Endothelial cell of umbilical vein (primary cell): ENCODE measurements at regions of chr17 and their contacts with region 1.

Region 1: DNA sequence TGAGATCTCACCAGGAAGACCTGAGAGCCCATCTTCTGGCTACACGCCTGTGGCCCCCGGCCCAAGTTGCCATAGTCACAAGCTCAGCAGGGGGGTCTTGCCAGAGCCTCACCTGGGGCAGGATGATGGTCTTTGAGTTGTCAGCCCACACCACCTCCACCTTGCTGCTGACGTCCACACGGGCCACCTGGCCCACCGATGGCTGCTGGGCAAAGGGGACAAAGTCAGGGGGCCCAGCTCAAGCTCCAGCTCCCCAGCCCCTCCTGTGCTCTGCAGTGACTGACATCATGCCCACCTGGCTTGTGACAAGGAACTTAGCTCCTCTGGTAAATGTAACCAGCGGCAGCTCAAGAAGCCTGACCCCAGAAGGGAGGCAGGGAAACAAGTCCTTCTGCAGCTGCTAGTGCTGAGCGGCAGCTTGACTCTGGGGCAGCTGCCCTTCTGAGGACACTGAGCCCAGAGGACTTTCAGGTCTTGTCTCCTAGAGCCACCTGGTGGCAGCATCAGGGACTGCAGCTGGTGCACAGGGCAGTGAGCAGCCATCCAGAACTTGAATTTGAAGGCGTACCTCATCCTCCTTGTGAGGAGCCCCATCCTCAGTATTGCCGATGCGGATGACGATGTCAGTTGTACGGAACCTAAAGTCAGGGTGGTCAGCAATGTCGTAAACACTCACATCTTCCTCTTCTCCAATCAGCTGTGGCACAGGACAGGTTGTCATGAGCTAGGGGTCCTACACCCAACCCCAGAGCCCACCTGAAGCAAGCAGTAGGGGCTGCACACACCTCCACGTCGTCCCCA is 13.5 kb downstream of the SPHK1 start:
- DNase-seq: peak; percentile 81
- H3K4me3 ChIP-seq: no peak overlapping the region
- H3K27ac ChIP-seq: no peak overlapping the region
- H3K4me1 ChIP-seq: no peaks in the 10 kb centered on the region
- H3K27me3 ChIP-seq: no peaks in the 10 kb centered on the region
- CTCF ChIP-seq: peak; percentile 92 to 93
- POLR2A ChIP-seq: no peak

Region 2: DNA sequence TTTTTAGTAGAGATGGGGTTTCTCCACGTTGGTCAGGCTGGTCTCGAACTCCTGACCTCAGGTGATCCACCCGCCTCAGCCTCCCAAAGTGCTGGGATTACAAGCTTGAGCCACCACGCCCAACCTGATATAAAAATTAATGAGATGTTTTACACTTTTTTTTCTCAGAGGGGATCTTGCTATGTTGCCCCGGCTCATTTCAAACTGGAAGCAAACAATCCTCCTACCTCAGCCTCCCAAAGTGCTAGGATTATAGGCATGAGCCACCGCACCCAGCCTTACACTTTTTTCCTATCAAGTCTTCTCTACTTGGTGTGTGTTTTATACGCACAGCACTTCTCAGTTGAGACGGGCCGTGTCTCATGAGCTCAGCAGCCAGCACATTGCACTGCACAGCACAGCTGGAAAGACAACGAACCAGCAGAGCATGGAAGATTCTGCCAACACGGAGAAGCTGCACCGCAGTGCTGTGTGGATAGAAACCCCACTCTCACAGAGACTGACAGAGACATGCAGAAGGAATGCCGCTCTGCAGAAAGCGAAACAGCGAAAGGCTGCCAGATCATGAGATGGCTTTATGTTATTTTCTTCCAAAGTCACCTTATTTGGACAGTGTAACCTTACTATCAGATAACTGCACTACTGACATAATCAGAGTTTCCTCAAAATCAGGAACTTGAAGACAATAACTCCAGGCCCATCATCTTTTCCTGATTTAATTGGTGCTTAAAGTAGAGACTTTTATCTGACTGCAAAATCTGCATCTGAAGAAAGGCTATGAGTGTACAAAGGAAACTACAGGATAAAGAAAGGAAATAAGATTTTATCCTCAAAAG is 83.3 kb before region 1 on chr17:
- CTCF ChIA-PET with region 1: interaction called, 24 read pairs
- POLR2A ChIA-PET with region 1: no interaction called
- dilution Hi-C with region 1: no loop called
- intact Hi-C with region 1: no loop called
- DNase-seq: peak; percentile 88
- H3K4me3 ChIP-seq: peak overlapping the region in 1 of 3 experiments; percentile 23
- H3K27ac ChIP-seq: peak overlapping the region; percentile 71
- H3K4me1 ChIP-seq: peaks cover 30% of the 10 kb centered on the region
- H3K27me3 ChIP-seq: no peaks in the 10 kb centered on the region
- CTCF ChIP-seq: no peak
- POLR2A ChIP-seq: no peak

Region 3: DNA sequence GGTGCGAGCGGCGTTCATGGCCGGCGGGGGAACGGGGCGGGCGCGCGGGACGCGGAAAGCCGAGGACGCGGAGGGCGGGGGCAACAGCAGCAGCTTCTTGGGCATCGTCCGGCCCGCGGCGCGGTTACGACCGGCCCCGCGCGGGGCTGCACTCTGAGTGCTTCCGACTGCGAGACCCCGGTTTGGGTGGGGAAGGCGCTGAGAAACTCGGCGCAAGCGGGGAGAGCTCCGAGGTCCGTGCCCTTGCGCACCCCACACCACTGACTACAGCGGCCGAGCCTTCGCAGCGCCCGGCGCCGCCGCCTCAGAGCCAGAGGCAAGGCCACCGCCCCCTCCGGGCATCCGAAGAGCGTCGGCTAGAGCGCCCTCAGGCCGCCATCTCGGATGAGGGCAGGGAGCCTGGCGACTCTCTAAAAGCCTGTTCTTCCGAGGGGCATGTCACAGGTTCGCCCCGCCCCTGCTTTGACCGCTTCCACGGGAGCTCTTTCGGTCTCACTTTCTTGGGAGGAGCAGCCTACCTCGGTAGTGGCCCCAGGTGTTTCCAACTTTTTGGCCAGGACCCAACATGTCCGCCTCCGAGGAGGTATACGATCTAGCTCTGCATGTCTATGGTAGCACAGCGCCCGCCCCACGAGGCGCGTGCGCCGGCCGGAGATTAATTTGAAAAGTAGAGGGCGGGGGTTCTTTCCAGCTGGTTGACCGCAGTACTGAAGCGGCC is 44.1 kb before region 1 on chr17 and contains the start of gene PRPSAP1:
- CTCF ChIA-PET with region 1: interaction called, 40 read pairs
- POLR2A ChIA-PET with region 1: no interaction called
- dilution Hi-C with region 1: no loop called
- intact Hi-C with region 1: loop called (anchors 2 kb)
- DNase-seq: peak; percentile 94
- H3K4me3 ChIP-seq: peak within 1 kb of the TSS; percentile 50 to 94 (median 56)
- H3K27ac ChIP-seq: peak within 1 kb of the TSS; percentile 98
- H3K4me1 ChIP-seq: peaks cover 10% of the 10 kb centered on the region
- H3K27me3 ChIP-seq: no peaks in the 10 kb centered on the region
- CTCF ChIP-seq: peak in 1 of 2 donors; percentile 52
- POLR2A ChIP-seq: peak; percentile 96
- total RNA-seq, gene PRPSAP1: 79.1 and 90.2 TPM in 2 replicates

Region 4: GRCh38 chr17:76370261-76370993 is 27.5 kb before region 1 on chr17:
- CTCF ChIA-PET with region 1: interaction called, 103 read pairs
- POLR2A ChIA-PET with region 1: no interaction called
- dilution Hi-C with region 1: no loop called
- intact Hi-C with region 1: loop called (anchors 1 kb)
- DNase-seq: peak; percentile 92
- H3K4me3 ChIP-seq: no peak overlapping the region
- H3K27ac ChIP-seq: peak overlapping the region; percentile 97
- H3K4me1 ChIP-seq: peaks cover 28% of the 10 kb centered on the region
- H3K27me3 ChIP-seq: no peaks in the 10 kb centered on the region
- CTCF ChIP-seq: peak; percentile 56 to 62
- POLR2A ChIP-seq: no peak

Region 5: GRCh38 chr17:76523084-76524037 is 125.5 kb after region 1 on chr17:
- CTCF ChIA-PET with region 1: no interaction called
- POLR2A ChIA-PET with region 1: no interaction called
- dilution Hi-C with region 1: no loop called
- intact Hi-C with region 1: no loop called
- DNase-seq: peak; percentile 60
- H3K4me3 ChIP-seq: no peak overlapping the region
- H3K27ac ChIP-seq: no peak overlapping the region
- H3K4me1 ChIP-seq: peaks cover 10% of the 10 kb centered on the region
- H3K27me3 ChIP-seq: no peaks in the 10 kb centered on the region
- CTCF ChIP-seq: peak; percentile 99 to 100
- POLR2A ChIP-seq: no peak

Region 6: GRCh38 chr17:76623271-76624146 is 225.6 kb after region 1 on chr17:
- CTCF ChIA-PET with region 1: no interaction called
- POLR2A ChIA-PET with region 1: no interaction called
- dilution Hi-C with region 1: no loop called
- intact Hi-C with region 1: no loop called
- DNase-seq: peak; percentile 79
- H3K4me3 ChIP-seq: peak overlapping the region in 2 of 3 experiments; percentile 10 to 20
- H3K27ac ChIP-seq: peak overlapping the region; percentile 79
- H3K4me1 ChIP-seq: peaks cover 10% of the 10 kb centered on the region
- H3K27me3 ChIP-seq: peaks cover 0 to 2% of the 10 kb centered on the region in 2 experiments
- CTCF ChIP-seq: peak; percentile 96 to 97
- POLR2A ChIP-seq: no peak